WTC11 (cell line): ENCODE measurements at regions of chr19 and their contacts with region 1.

Region 1: GRCh38 chr19:58519355-58520256 is at the start of gene ZBTB45:
- DNase-seq: peak; percentile 92
- ATAC-seq: peak; percentile 75
- H3K4me3 Mint-ChIP-seq: peak within 1 kb of the TSS; percentile 97
- H3K27ac Mint-ChIP-seq: peak within 1 kb of the TSS; percentile 99
- H3K4me1 Mint-ChIP-seq: peaks cover 48% of the 10 kb centered on the region
- H3K27me3 Mint-ChIP-seq: no peaks in the 10 kb centered on the region
- CTCF ChIP-seq: peak; percentile 75
- total RNA-seq, gene ZBTB45: 17.0 to 19.7 TPM (median 18.0 TPM) in 3 replicates

Region 2: GRCh38 chr19:58380722-58381466 is 138.7 kb before region 1 on chr19 and contains the start of gene ZNF837:
- CTCF ChIA-PET with region 1: no interaction called
- POLR2A ChIA-PET with region 1: no interaction called
- DNase-seq: peak; percentile 99
- ATAC-seq: peak; percentile 90
- H3K4me3 Mint-ChIP-seq: peak within 1 kb of the TSS; percentile 85
- H3K27ac Mint-ChIP-seq: peak within 1 kb of the TSS; percentile 45
- H3K4me1 Mint-ChIP-seq: peaks cover 13% of the 10 kb centered on the region
- H3K27me3 Mint-ChIP-seq: no peaks in the 10 kb centered on the region
- CTCF ChIP-seq: no peak
- total RNA-seq, gene ZNF837: 3.4 to 4.9 TPM (median 4.6 TPM) in 3 replicates

Region 3: DNA sequence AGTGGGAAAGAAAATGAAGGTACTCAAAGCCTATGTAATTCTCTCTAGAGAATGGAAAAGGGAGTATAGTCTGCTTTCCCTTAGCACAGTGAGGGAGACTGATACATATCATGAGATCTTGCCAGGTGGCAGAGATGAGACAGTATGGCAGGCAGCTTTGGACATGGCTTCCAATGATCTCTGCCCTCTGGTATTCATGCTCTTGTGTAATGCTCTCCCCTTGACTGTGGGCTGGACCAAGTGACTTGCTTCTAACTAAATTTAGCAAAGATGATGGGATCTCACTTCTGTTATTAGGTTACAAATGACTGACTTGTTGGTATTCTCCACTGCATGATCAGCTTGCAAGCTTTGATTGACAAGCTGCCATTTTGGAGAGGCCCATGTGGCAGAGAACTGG is 89.9 kb before region 1 on chr19:
- CTCF ChIA-PET with region 1: no interaction called
- POLR2A ChIA-PET with region 1: no interaction called
- DNase-seq: no peak
- ATAC-seq: no peak
- H3K4me3 Mint-ChIP-seq: no peak overlapping the region
- H3K27ac Mint-ChIP-seq: no peak overlapping the region
- H3K4me1 Mint-ChIP-seq: no peaks in the 10 kb centered on the region
- H3K27me3 Mint-ChIP-seq: peaks cover 67% of the 10 kb centered on the region
- CTCF ChIP-seq: no peak

Region 4: DNA sequence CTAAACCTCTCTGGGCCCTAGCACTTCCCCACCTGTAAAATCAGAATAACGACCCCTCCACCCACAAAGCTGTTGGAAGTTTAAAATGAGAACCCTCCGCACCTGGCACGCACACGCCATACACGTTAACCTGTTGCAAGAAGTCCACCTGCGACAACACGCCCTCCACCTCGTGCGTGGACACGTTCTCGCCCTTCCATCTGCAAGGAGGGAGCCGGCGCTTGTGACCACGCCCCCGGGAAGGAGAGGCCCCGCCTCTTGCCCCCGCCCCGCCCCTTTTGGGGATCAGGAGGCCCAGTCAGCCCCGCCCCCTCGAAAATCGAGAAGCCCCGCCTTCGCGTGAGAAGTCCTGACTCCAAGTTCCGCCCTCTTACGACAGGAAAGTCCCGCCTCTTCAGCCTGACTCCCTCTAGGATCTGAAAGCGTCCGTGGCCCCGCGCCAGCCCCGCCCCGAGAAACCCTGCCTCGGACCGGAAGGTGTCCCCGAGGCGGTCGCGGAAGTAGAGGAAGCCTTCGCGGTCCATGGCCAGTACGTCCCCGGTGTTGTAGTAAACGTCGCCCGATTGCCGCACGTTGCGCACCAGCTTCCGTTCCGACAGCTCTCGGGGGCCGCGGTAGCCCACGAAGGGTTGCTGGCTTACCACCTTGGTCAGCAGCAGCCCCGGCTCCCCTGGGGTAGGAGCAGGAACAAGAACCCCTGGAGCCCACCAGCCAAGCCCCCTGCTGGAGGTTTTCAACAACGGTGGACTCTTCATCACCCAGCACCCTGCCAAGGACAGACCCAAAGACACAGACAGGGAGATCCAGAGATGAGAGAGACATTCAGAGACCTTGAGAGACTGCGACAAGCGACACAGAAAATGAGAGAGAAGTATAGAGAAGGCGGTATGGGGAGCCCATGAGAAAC is 20.3 kb before region 1 on chr19:
- CTCF ChIA-PET with region 1: interaction called, 16 read pairs
- POLR2A ChIA-PET with region 1: no interaction called
- DNase-seq: peak; percentile 100
- ATAC-seq: peak; percentile 98
- H3K4me3 Mint-ChIP-seq: peak overlapping the region; percentile 81
- H3K27ac Mint-ChIP-seq: peak overlapping the region; percentile 98
- H3K4me1 Mint-ChIP-seq: peaks cover 17% of the 10 kb centered on the region
- H3K27me3 Mint-ChIP-seq: peaks cover 11% of the 10 kb centered on the region
- CTCF ChIP-seq: no peak

Region 5: DNA sequence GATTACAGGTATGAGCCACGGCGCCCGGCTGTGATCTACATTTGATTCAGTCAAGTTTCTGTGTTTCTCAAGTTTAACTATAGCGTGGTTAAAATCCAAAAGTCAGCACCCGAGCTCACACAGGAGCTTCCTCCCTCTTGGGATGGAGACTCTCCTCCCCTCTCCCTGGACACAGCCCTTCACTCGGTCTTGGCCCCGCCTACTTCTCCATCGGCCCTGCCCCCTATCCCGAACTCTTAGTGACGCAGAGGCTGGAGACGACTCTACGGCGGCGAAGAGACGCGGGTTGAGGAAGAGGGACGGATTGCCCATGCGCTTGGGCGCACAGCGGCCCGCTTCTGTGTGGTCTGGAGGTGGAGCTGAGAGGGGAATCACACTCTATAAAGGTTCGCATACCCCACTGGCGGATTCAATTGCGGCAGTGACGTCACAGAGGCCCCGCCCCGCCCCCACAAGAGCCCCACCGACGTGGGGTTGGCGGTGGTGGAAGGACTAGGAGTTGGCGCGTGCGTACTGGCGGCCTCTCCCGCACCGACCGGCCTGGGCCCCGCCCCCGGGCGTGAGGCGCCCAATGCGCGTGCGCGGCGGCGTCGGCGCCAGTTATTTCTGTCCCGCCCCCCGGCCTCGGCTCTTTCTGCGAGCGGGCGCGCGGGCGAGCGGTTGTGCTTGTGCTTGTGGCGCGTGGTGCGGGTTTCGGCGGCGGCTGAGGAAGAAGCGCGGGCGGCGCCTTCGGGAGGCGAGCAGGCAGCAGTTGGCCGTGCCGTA is 24.4 kb after region 1 on chr19 and contains the start of gene TRIM28:
- CTCF ChIA-PET with region 1: interaction called, 60 read pairs
- POLR2A ChIA-PET with region 1: interaction called, 25 read pairs
- DNase-seq: peak; percentile 98
- ATAC-seq: peak; percentile 95
- H3K4me3 Mint-ChIP-seq: peak within 1 kb of the TSS; percentile 97
- H3K27ac Mint-ChIP-seq: peak within 1 kb of the TSS; percentile 99
- H3K4me1 Mint-ChIP-seq: peaks cover 17% of the 10 kb centered on the region
- H3K27me3 Mint-ChIP-seq: peaks cover 45% of the 10 kb centered on the region
- CTCF ChIP-seq: no peak
- total RNA-seq, gene TRIM28: 1,095 to 1,221 TPM (median 1,108 TPM) in 3 replicates

Region 6: GRCh38 chr19:58575183-58576064 is 55.8 kb after region 1 on chr19:
- CTCF ChIA-PET with region 1: interaction called, 33 read pairs
- POLR2A ChIA-PET with region 1: interaction called, 9 read pairs
- DNase-seq: peak; percentile 92
- ATAC-seq: peak; percentile 60
- H3K4me3 Mint-ChIP-seq: peak overlapping the region; percentile 99
- H3K27ac Mint-ChIP-seq: peak overlapping the region; percentile 93
- H3K4me1 Mint-ChIP-seq: peaks cover 17% of the 10 kb centered on the region
- H3K27me3 Mint-ChIP-seq: no peaks in the 10 kb centered on the region
- CTCF ChIP-seq: no peak